HEK293T (cell line): ENCODE measurements at regions of chr5 and their contacts with region 1.

Region 1: DNA sequence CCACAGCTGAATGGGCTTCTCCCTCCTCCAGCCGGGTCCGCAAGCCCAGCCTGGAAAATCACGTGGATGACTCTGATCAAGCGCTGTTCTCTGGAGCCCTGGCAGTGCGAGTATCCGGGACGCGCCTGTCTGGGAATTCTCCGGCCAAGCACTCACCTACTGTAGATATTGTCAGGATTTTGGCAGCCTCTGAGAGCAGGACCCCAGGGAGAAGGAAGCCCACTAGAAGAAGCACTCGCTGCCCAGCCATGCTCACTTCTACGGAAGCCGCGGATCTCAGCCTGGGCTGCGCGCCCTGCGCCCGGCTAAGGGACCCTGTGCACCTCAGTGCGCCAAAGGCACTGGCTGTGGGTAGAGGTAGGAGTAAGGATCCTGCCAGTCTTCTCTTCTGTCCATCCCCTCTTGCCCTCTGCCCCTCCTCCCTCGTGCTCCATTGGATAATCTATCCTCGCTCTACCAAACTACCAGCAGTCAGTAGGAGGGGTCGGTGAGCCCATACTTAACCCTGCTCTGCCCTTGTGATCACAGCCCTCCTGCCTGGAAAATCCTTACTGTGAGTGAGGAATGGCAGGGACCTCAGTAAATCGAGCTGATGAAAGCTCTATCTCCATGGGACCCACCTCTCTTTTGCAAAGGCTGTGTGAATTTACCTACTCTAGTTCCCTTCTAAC is at the start of gene UGT3A2:
- DNase-seq: peak; percentile 34

Region 2: GRCh38 chr5:36079200-36079761 is 12.6 kb after region 1 on chr5:
- CTCF ChIA-PET with region 1: interaction called, 13 read pairs
- POLR2A ChIA-PET with region 1: no interaction called
- DNase-seq: peak; percentile 68